SK-N-SH (cell line): ENCODE measurements at regions of chr1 and their contacts with region 1.

Region 1: GRCh38 chr1:20640183-20640597 is 6.9 kb downstream of the PINK1 start:
- DNase-seq: peak; percentile 79
- H3K4me3 ChIP-seq: no peak overlapping the region; a peak in 1 of 4 replicates
- H3K27ac ChIP-seq: no peak overlapping the region
- H3K4me1 ChIP-seq: no peaks in the 10 kb centered on the region
- H3K27me3 ChIP-seq: no peaks in the 10 kb centered on the region
- CTCF ChIP-seq: peak; percentile 84
- EP300 ChIP-seq: no peak
- RAD21 ChIP-seq: peak; percentile 82

Region 2: DNA sequence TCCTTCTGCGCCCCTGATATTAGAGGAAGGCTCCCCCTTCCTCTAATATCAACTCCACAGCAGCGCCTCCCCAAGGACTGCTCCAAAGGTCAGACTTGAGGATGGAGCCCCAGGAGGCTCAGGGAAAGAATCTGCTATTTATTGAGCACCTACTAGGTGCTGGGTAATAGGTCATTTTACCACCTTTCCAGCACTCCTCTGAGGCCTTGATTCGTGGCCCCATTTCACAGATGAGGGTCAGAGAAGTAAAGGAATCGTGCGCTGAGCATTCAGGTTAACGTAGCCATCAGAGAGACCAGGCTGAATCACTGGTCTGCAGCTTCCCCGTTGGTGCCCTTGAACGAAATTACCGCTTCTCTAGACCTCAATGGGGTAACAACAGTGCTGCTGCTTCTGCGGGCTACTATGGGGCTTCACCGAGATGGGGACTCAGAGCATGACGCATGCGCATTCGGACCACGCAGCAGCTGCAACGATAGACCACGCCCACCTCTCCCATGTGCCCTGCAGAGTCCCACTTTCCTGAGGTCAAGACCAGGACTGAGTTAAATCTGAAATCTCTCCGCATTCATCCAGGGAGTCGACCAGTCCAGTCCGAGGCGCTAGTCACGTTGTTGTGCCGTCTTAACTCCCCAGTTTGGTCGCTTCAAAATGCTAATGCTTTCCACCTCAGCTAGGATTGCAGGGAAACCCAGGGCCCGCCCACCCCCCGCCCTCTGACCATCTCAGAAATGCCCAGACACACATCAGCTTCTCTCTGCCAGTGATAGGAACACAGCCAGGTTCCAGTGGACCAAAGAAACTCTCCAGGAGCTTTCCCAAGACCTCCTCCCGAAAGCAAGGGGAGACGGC is 167.1 kb before region 1 on chr1:
- CTCF ChIA-PET with region 1: no interaction called
- POLR2A ChIA-PET with region 1: no interaction called
- DNase-seq: peak; percentile 78
- H3K4me3 ChIP-seq: no peak overlapping the region
- H3K27ac ChIP-seq: peak overlapping the region in 1 of 2 experiments; percentile 74; a peak in 2 of 4 replicates
- H3K4me1 ChIP-seq: peaks cover 0 to 38% of the 10 kb centered on the region in 2 experiments; a peak in 2 of 4 replicates
- H3K27me3 ChIP-seq: no peaks in the 10 kb centered on the region
- CTCF ChIP-seq: no peak
- EP300 ChIP-seq: no peak
- RAD21 ChIP-seq: no peak

Region 3: GRCh38 chr1:20521960-20522861 is 118.0 kb before region 1 on chr1:
- CTCF ChIA-PET with region 1: interaction called, 49 read pairs
- POLR2A ChIA-PET with region 1: no interaction called
- DNase-seq: peak; percentile 69
- H3K4me3 ChIP-seq: peak overlapping the region in 1 of 2 experiments; percentile 48; a peak in 1 of 4 replicates
- H3K27ac ChIP-seq: no peak overlapping the region
- H3K4me1 ChIP-seq: no peaks in the 10 kb centered on the region; a peak in 1 of 4 replicates
- H3K27me3 ChIP-seq: peaks cover 25% of the 10 kb centered on the region; the same call in 1 of the 2 replicates
- CTCF ChIP-seq: peak; percentile 95
- EP300 ChIP-seq: no peak
- RAD21 ChIP-seq: peak; percentile 94

Region 4: GRCh38 chr1:20558191-20558590 is 82.0 kb before region 1 on chr1:
- CTCF ChIA-PET with region 1: no interaction called
- POLR2A ChIA-PET with region 1: no interaction called
- DNase-seq: no peak
- H3K4me3 ChIP-seq: no peak overlapping the region
- H3K27ac ChIP-seq: no peak overlapping the region
- H3K4me1 ChIP-seq: peaks cover 0 to 9% of the 10 kb centered on the region in 2 experiments; a peak in 1 of 4 replicates
- H3K27me3 ChIP-seq: peaks cover 30% of the 10 kb centered on the region; the same call in 1 of the 2 replicates
- CTCF ChIP-seq: no peak
- EP300 ChIP-seq: no peak
- RAD21 ChIP-seq: no peak

Region 5: DNA sequence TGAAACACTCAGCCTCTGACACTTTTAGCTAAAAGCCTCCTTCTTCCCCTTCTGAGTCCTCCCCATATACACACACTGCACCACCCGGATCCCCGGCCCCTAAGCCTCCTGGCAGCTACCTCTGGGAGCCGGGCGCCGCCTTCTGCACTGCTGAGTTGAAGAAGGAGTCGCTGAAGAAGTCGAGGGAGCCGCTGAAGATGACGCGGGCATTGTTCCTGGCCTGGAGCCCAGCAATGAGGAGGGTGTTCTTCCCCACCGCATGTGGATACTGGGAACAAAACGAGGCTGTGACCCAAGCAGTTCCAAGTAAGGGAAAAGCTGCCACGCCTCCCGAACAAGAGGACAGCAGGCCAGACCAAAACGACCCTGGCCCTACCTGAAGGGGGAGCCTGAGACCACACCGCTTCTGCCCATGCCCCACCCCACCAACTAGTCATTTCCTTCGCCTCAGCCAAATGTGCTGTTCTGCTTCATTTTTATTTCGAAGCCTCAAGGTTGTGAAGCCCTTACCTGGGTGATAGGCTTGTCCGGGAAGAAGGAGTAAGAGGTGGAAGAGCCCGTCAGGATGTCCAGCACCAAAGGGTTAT is 14.0 kb after region 1 on chr1:
- CTCF ChIA-PET with region 1: interaction called, 17 read pairs
- POLR2A ChIA-PET with region 1: no interaction called
- DNase-seq: no peak
- H3K4me3 ChIP-seq: no peak overlapping the region
- H3K27ac ChIP-seq: no peak overlapping the region
- H3K4me1 ChIP-seq: no peaks in the 10 kb centered on the region
- H3K27me3 ChIP-seq: no peaks in the 10 kb centered on the region
- CTCF ChIP-seq: no peak
- EP300 ChIP-seq: no peak
- RAD21 ChIP-seq: no peak

Region 6: GRCh38 chr1:20661207-20662109 is 21.3 kb after region 1 on chr1 and contains the start of gene DDOST:
- CTCF ChIA-PET with region 1: interaction called, 12 read pairs
- POLR2A ChIA-PET with region 1: interaction called, 3 read pairs
- DNase-seq: peak; percentile 98
- H3K4me3 ChIP-seq: peak within 1 kb of the TSS; percentile 89 to 99
- H3K27ac ChIP-seq: peak within 1 kb of the TSS; percentile 62 to 92
- H3K4me1 ChIP-seq: peaks cover 9 to 14% of the 10 kb centered on the region in 2 experiments
- H3K27me3 ChIP-seq: no peaks in the 10 kb centered on the region
- CTCF ChIP-seq: peak; percentile 49
- EP300 ChIP-seq: no peak
- RAD21 ChIP-seq: no peak
- polyA plus RNA-seq, gene DDOST: 602 and 763 TPM in 2 replicates

Region 7: GRCh38 chr1:20682571-20683236 is 42.5 kb after region 1 on chr1:
- CTCF ChIA-PET with region 1: no interaction called
- POLR2A ChIA-PET with region 1: no interaction called
- DNase-seq: no peak
- H3K4me3 ChIP-seq: no peak overlapping the region
- H3K27ac ChIP-seq: no peak overlapping the region
- H3K4me1 ChIP-seq: no peaks in the 10 kb centered on the region; a peak in 1 of 4 replicates
- H3K27me3 ChIP-seq: no peaks in the 10 kb centered on the region
- CTCF ChIP-seq: no peak
- EP300 ChIP-seq: no peak
- RAD21 ChIP-seq: no peak